ENCODE measurements at regions of chr3 and their contacts with region 1.

Region 1: DNA sequence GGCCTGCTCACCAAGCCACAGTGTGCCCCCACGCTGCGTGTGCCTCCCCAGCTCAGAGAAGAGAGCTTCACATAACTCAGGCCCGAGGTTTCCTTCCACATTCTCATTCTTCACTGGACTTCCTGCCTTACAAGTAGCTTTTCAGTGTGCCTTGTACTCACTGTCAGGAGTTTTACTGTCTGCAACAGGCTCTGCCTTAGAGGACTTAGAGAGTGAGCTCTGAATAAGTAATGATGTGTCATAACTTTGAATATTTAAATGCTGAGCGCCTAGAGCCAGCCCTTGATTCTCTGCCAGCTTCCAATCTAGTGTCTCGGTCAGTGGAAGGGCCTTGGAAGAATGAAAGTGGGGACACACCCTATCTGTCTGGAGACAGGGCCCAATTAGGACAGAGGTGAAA is 41.8 kb downstream of the ITGB5 start:
- DNase-seq: peak; percentile 76 to 88
- H3K4me3 ChIP-seq: no peak overlapping the region
- H3K27ac ChIP-seq: peak overlapping the region; percentile 69
- H3K4me1 ChIP-seq: peaks cover 27% of the 10 kb centered on the region
- H3K27me3 ChIP-seq: no peaks in the 10 kb centered on the region
- CTCF ChIP-seq: no peak

Region 2: DNA sequence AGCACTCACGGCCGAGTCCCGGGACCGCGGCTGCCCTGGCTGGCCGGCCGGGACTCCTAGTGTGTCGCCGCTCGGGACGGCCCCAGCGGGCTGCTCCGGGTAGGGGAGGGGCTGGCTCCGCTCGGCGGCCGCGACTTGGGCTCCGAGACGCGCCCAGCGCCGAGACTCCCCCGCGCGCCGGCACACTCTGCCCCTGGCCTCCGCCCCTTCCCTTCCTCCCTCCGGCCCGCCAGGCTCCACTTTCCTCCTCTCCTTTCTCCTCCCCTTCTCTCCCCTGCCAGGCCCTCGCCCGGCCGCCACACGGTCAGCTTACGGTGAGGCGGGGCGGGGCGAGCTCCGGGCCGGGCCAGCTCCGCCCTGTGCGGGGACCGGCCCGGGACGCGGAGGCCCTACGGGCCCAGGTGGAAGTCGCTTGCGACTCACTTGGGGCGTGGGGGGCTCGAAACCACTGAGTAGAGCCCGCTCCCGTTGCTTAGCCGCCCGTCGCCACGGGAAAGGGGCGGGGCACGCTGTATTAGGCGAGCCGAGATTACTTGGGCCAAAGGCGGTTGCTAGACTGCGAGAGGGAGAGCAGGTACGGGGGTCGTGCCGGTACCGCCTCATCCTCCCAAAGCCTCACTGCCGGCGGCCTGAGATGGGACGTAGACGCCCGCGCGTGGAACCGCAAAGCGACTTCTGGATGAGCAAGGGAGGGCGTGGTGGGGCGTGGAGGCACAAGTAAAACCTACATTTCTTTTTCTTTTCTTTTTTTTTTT is 41.9 kb after region 1 on chr3 and contains the start of gene ITGB5:
- CTCF ChIA-PET with region 1: no interaction called
- POLR2A ChIA-PET with region 1: interaction called, 14 read pairs
- intact Hi-C with region 1: no loop called
- DNase-seq: peak; percentile 56 to 89
- H3K4me3 ChIP-seq: peak within 1 kb of the TSS; percentile 84
- H3K27ac ChIP-seq: peak within 1 kb of the TSS; percentile 69
- H3K4me1 ChIP-seq: peaks cover 41% of the 10 kb centered on the region
- H3K27me3 ChIP-seq: no peaks in the 10 kb centered on the region
- CTCF ChIP-seq: no peak
- total RNA-seq, gene ITGB5: 226 and 287 TPM in 2 replicates

Measured in PC-9 (cell line).